Naive thymus-derived CD4-positive, alpha-beta T cell (primary cell): ENCODE measurements at regions of chr1 and their contacts with region 1.

Region 1: DNA sequence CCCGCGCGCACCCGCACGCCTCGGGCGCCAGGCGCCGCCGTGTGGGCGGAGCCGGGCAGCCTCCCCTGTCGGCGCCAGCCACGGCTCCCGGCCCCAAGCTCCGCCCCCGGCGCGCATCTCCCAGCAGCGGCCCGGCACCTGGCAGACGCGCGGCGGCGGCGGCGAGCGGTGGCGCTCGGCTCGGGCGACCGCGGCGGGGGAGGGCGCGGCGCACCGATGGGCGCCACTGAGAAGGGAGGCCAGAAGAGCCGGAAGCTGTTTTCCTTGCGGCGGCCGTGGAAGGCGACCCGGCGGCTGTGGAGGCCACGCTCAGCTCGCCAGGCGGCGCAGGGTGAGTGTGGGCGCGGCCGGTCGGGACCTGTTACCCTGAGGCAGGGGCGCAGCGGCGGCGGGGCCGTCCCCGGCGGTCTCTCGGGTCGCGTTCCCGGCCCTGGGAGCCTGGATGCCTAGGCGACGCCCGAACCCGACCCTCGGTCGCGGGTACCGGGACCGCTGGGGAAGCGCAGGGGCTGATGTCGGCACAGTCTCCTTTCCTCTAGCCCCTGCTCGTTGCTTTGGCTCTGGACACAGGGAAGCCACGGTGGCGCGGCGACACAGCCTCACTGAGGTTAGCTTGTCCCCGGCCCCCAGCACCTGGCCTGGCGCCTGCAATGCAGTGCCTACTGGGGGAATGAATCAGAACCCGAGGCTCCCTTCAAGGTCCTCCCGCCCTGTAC is 54.9 kb upstream of the DNAJC6 start:
- DNase-seq: peak; percentile 70 to 90 (median 82)
- ATAC-seq: peak; percentile 97
- H3K4me3 ChIP-seq: peak overlapping the region; percentile 80
- H3K4me3 Mint-ChIP-seq: peak overlapping the region; percentile 87 to 99 (median 92)
- H3K27ac ChIP-seq: peak overlapping the region; percentile 69
- H3K27ac Mint-ChIP-seq: peak overlapping the region in 5 of 9 donors; percentile 10 to 93 (median 78)
- H3K4me1 ChIP-seq: peaks cover 10 to 14% of the 10 kb centered on the region in 2 donors
- H3K4me1 Mint-ChIP-seq: peaks cover 12 to 23% (median 18%) of the 10 kb centered on the region in 7 donors
- H3K27me3 ChIP-seq: no peaks in the 10 kb centered on the region
- H3K27me3 Mint-ChIP-seq: peaks cover 0 to 31% (median 10%) of the 10 kb centered on the region in 5 donors

Region 2: GRCh38 chr1:63367215-63368103 is 1887.0 kb before region 1 on chr1 and contains the start of gene ALG6:
- CTCF ChIA-PET with region 1: no interaction called
- POLR2A ChIA-PET with region 1: no interaction called
- intact Hi-C with region 1: loop called in 1 of 2 experiments (anchors 2 kb)
- DNase-seq: peak; percentile 66 to 98 (median 84)
- ATAC-seq: peak; percentile 99
- H3K4me3 ChIP-seq: peak within 1 kb of the TSS; percentile 95
- H3K4me3 Mint-ChIP-seq: peak within 1 kb of the TSS; percentile 91 to 99 (median 94)
- H3K27ac ChIP-seq: peak within 1 kb of the TSS; percentile 72
- H3K27ac Mint-ChIP-seq: peak within 1 kb of the TSS; percentile 79 to 93 (median 84)
- H3K4me1 ChIP-seq: peaks cover 0 to 7% of the 10 kb centered on the region in 2 donors
- H3K4me1 Mint-ChIP-seq: peaks cover 23 to 46% (median 36%) of the 10 kb centered on the region in 7 donors
- H3K27me3 ChIP-seq: no peaks in the 10 kb centered on the region
- H3K27me3 Mint-ChIP-seq: peaks cover 0 to 7% (median 0%) of the 10 kb centered on the region in 5 donors
- total RNA-seq, gene ALG6: 16.1 to 29.8 (median 27.3) TPM

Region 3: DNA sequence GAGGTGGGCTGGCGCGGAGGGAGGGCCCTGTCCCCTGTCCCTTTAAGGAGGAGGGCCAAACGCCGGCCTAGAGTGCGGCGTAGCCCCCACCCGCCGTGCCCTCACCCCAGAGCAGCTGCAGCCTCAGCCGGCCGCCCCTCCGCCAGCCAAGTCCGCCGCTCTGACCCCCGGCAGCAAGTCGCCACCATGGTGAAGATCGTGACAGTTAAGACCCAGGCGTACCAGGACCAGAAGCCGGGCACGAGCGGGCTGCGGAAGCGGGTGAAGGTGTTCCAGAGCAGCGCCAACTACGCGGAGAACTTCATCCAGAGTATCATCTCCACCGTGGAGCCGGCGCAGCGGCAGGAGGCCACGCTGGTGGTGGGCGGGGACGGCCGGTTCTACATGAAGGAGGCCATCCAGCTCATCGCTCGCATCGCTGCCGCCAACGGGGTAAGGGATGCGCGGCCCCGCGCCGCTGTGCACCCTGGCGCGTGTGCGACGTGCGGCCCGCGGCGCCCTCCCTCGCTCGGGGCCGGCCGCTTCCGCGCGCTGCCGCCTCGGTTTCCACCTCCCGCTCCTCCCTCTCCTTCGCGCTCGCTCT is 1661.1 kb before region 1 on chr1 and contains the start of gene PGM1:
- CTCF ChIA-PET with region 1: no interaction called
- POLR2A ChIA-PET with region 1: no interaction called
- intact Hi-C with region 1: loop called in 1 of 2 experiments (anchors 2 kb)
- DNase-seq: peak; percentile 63 to 81 (median 76)
- ATAC-seq: peak; percentile 91
- H3K4me3 ChIP-seq: peak within 1 kb of the TSS; percentile 71
- H3K4me3 Mint-ChIP-seq: peak within 1 kb of the TSS; percentile 96 to 99 (median 98)
- H3K27ac ChIP-seq: peak within 1 kb of the TSS; percentile 90
- H3K27ac Mint-ChIP-seq: peak within 1 kb of the TSS; percentile 95 to 99 (median 99)
- H3K4me1 ChIP-seq: peaks cover 0 to 7% of the 10 kb centered on the region in 2 donors
- H3K4me1 Mint-ChIP-seq: peaks cover 21 to 49% (median 40%) of the 10 kb centered on the region in 7 donors
- H3K27me3 ChIP-seq: no peaks in the 10 kb centered on the region
- H3K27me3 Mint-ChIP-seq: no peaks in the 10 kb centered on the region
- total RNA-seq, gene PGM1: 11.9 to 57.2 (median 16.1) TPM

Region 4: GRCh38 chr1:65148548-65149350 is 105.7 kb before region 1 on chr1:
- CTCF ChIA-PET with region 1: no interaction called
- POLR2A ChIA-PET with region 1: interaction called, 4 read pairs
- intact Hi-C with region 1: loop called in 1 of 2 experiments (anchors 1 kb)
- DNase-seq: peak in 6 of 9 donors; percentile 8 to 82 (median 18)
- ATAC-seq: peak; percentile 51
- H3K4me3 ChIP-seq: peak overlapping the region; percentile 45
- H3K4me3 Mint-ChIP-seq: peak overlapping the region; percentile 81 to 95 (median 86)
- H3K27ac ChIP-seq: no peak overlapping the region
- H3K27ac Mint-ChIP-seq: peak overlapping the region in 1 of 9 donors; percentile 81
- H3K4me1 ChIP-seq: peaks cover 0 to 6% of the 10 kb centered on the region in 2 donors
- H3K4me1 Mint-ChIP-seq: peaks cover 7 to 52% (median 14%) of the 10 kb centered on the region in 7 donors
- H3K27me3 ChIP-seq: peaks cover 0 to 6% of the 10 kb centered on the region in 2 donors
- H3K27me3 Mint-ChIP-seq: peaks cover 12 to 60% (median 53%) of the 10 kb centered on the region in 5 donors

Region 5: GRCh38 chr1:65265651-65266351 is 11.3 kb after region 1 on chr1:
- CTCF ChIA-PET with region 1: interaction called, 3 read pairs
- POLR2A ChIA-PET with region 1: interaction called, 25 read pairs
- intact Hi-C with region 1: loop called (anchors 1 kb)
- DNase-seq: peak; percentile 21 to 60 (median 51)
- ATAC-seq: peak; percentile 76
- H3K4me3 ChIP-seq: peak overlapping the region; percentile 55
- H3K4me3 Mint-ChIP-seq: peak overlapping the region; percentile 51 to 89 (median 82)
- H3K27ac ChIP-seq: peak overlapping the region; percentile 24
- H3K27ac Mint-ChIP-seq: peak overlapping the region in 7 of 9 donors; percentile 49 to 79 (median 72)
- H3K4me1 ChIP-seq: peaks cover 11 to 16% of the 10 kb centered on the region in 2 donors
- H3K4me1 Mint-ChIP-seq: peaks cover 13 to 30% (median 19%) of the 10 kb centered on the region in 7 donors
- H3K27me3 ChIP-seq: no peaks in the 10 kb centered on the region
- H3K27me3 Mint-ChIP-seq: peaks cover 13 to 47% (median 24%) of the 10 kb centered on the region in 5 donors

Region 6: GRCh38 chr1:65276197-65276939 is 21.9 kb after region 1 on chr1:
- CTCF ChIA-PET with region 1: no interaction called
- POLR2A ChIA-PET with region 1: no interaction called
- intact Hi-C with region 1: no loop called
- DNase-seq: no peak
- ATAC-seq: no peak
- H3K4me3 ChIP-seq: no peak overlapping the region
- H3K4me3 Mint-ChIP-seq: no peak overlapping the region
- H3K27ac ChIP-seq: no peak overlapping the region
- H3K27ac Mint-ChIP-seq: no peak overlapping the region
- H3K4me1 ChIP-seq: no peaks in the 10 kb centered on the region
- H3K4me1 Mint-ChIP-seq: no peaks in the 10 kb centered on the region
- H3K27me3 ChIP-seq: no peaks in the 10 kb centered on the region
- H3K27me3 Mint-ChIP-seq: peaks cover 16 to 37% (median 31%) of the 10 kb centered on the region in 5 donors

Region 7: GRCh38 chr1:65393347-65393746 is 138.9 kb after region 1 on chr1:
- CTCF ChIA-PET with region 1: no interaction called
- POLR2A ChIA-PET with region 1: no interaction called
- intact Hi-C with region 1: loop called in 1 of 2 experiments (anchors 1 kb)
- DNase-seq: peak in 1 of 9 donors; percentile 24
- ATAC-seq: no peak
- H3K4me3 ChIP-seq: no peak overlapping the region
- H3K4me3 Mint-ChIP-seq: peak overlapping the region in 1 of 10 donors; percentile 62
- H3K27ac ChIP-seq: no peak overlapping the region
- H3K27ac Mint-ChIP-seq: peak overlapping the region in 1 of 9 donors; percentile 84
- H3K4me1 ChIP-seq: no peaks in the 10 kb centered on the region
- H3K4me1 Mint-ChIP-seq: peaks cover 0 to 81% (median 0%) of the 10 kb centered on the region in 7 donors
- H3K27me3 ChIP-seq: no peaks in the 10 kb centered on the region
- H3K27me3 Mint-ChIP-seq: no peaks in the 10 kb centered on the region

Region 8: GRCh38 chr1:66339944-66340343 is 1085.5 kb after region 1 on chr1:
- CTCF ChIA-PET with region 1: no interaction called
- POLR2A ChIA-PET with region 1: no interaction called
- intact Hi-C with region 1: loop called (anchors 5 to 10 kb)
- DNase-seq: peak in 2 of 9 donors; percentile 18 to 30
- ATAC-seq: no peak
- H3K4me3 ChIP-seq: peak overlapping the region; percentile 10
- H3K4me3 Mint-ChIP-seq: peak overlapping the region in 9 of 10 donors; percentile 34 to 83 (median 68)
- H3K27ac ChIP-seq: peak overlapping the region; percentile 1
- H3K27ac Mint-ChIP-seq: peak overlapping the region; percentile 43 to 92 (median 83)
- H3K4me1 ChIP-seq: peaks cover 58 to 62% of the 10 kb centered on the region in 2 donors
- H3K4me1 Mint-ChIP-seq: peaks cover 45 to 89% (median 84%) of the 10 kb centered on the region in 7 donors
- H3K27me3 ChIP-seq: no peaks in the 10 kb centered on the region
- H3K27me3 Mint-ChIP-seq: no peaks in the 10 kb centered on the region

Region 9: GRCh38 chr1:66938613-66939012 is 1684.1 kb after region 1 on chr1:
- CTCF ChIA-PET with region 1: no interaction called
- POLR2A ChIA-PET with region 1: no interaction called
- intact Hi-C with region 1: no loop called
- DNase-seq: no peak
- ATAC-seq: no peak
- H3K4me3 ChIP-seq: no peak overlapping the region
- H3K4me3 Mint-ChIP-seq: peak overlapping the region in 7 of 10 donors; percentile 30 to 69 (median 45)
- H3K27ac ChIP-seq: no peak overlapping the region
- H3K27ac Mint-ChIP-seq: peak overlapping the region in 3 of 9 donors; percentile 16 to 80 (median 68)
- H3K4me1 ChIP-seq: peaks cover 48 to 59% of the 10 kb centered on the region in 2 donors
- H3K4me1 Mint-ChIP-seq: peaks cover 57 to 99% (median 89%) of the 10 kb centered on the region in 7 donors
- H3K27me3 ChIP-seq: no peaks in the 10 kb centered on the region
- H3K27me3 Mint-ChIP-seq: no peaks in the 10 kb centered on the region